ENCODE measurements at regions of chr18 and their contacts with region 1.

Region 1: DNA sequence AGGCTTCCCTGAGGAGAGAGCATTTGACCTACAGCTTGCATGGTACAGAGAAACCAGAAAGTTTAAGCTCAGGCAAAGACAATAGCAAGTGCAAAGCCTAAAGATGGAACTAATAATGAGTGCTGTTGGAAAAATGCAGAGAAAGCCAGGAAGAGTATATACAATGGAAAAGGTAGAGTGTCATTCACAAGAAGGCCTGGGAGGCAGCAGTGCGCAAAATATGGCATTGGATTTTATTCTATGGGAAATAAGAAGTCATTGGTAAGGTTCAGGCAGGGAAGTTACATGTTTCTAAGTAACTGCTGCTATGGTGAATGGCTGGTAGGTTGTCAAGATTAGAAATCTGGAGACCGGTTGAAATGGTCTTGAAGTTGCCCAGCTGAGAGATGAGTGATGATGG is 2167.3 kb upstream of the CELF4 start:
- H3K4me3 Mint-ChIP-seq: no peak overlapping the region
- H3K27ac Mint-ChIP-seq: no peak overlapping the region
- H3K4me1 Mint-ChIP-seq: no peaks in the 10 kb centered on the region
- H3K27me3 Mint-ChIP-seq: no peaks in the 10 kb centered on the region

Region 2: GRCh38 chr18:39675368-39675767 is 57.5 kb before region 1 on chr18:
- intact Hi-C with region 1: loop called (anchors 10 kb)
- H3K4me3 Mint-ChIP-seq: no peak overlapping the region
- H3K27ac Mint-ChIP-seq: no peak overlapping the region
- H3K4me1 Mint-ChIP-seq: peaks cover 10% of the 10 kb centered on the region
- H3K27me3 Mint-ChIP-seq: peaks cover 2% of the 10 kb centered on the region

Region 3: GRCh38 chr18:39909706-39910105 is 176.8 kb after region 1 on chr18:
- intact Hi-C with region 1: no loop called
- H3K4me3 Mint-ChIP-seq: no peak overlapping the region
- H3K27ac Mint-ChIP-seq: no peak overlapping the region
- H3K4me1 Mint-ChIP-seq: no peaks in the 10 kb centered on the region
- H3K27me3 Mint-ChIP-seq: no peaks in the 10 kb centered on the region